B cell (primary cell): ENCODE measurements at regions of chr19 and their contacts with region 1.

Region 1: GRCh38 chr19:54390942-54391577 is 24.2 kb upstream of the TTYH1 start:
- DNase-seq: peak; percentile 85
- ATAC-seq: peak; percentile 34
- H3K4me3 ChIP-seq: no peak overlapping the region
- H3K4me3 Mint-ChIP-seq: peak overlapping the region; percentile 68
- H3K27ac ChIP-seq: no peak overlapping the region
- H3K27ac Mint-ChIP-seq: peak overlapping the region; percentile 73
- H3K4me1 ChIP-seq: peaks cover 41 to 50% of the 10 kb centered on the region in 2 donors
- H3K4me1 Mint-ChIP-seq: peaks cover 46% of the 10 kb centered on the region
- H3K27me3 ChIP-seq: peaks cover 0 to 1% (median 0%) of the 10 kb centered on the region in 4 experiments
- H3K27me3 Mint-ChIP-seq: peaks cover 17% of the 10 kb centered on the region
- CTCF ChIP-seq: peak; percentile 94

Region 2: GRCh38 chr19:54325194-54325621 is 65.9 kb before region 1 on chr19:
- CTCF ChIA-PET with region 1: interaction called, 235 read pairs
- POLR2A ChIA-PET with region 1: interaction called, 6 read pairs
- intact Hi-C with region 1: loop called (anchors 1 kb)
- DNase-seq: peak; percentile 79
- ATAC-seq: peak; percentile 70
- H3K4me3 ChIP-seq: no peak overlapping the region
- H3K4me3 Mint-ChIP-seq: peak overlapping the region; percentile 42
- H3K27ac ChIP-seq: no peak overlapping the region
- H3K27ac Mint-ChIP-seq: peak overlapping the region; percentile 74
- H3K4me1 ChIP-seq: peaks cover 39 to 48% of the 10 kb centered on the region in 2 donors
- H3K4me1 Mint-ChIP-seq: peaks cover 39% of the 10 kb centered on the region
- H3K27me3 ChIP-seq: no peaks in the 10 kb centered on the region
- H3K27me3 Mint-ChIP-seq: peaks cover 8% of the 10 kb centered on the region
- CTCF ChIP-seq: peak; percentile 98

Region 3: DNA sequence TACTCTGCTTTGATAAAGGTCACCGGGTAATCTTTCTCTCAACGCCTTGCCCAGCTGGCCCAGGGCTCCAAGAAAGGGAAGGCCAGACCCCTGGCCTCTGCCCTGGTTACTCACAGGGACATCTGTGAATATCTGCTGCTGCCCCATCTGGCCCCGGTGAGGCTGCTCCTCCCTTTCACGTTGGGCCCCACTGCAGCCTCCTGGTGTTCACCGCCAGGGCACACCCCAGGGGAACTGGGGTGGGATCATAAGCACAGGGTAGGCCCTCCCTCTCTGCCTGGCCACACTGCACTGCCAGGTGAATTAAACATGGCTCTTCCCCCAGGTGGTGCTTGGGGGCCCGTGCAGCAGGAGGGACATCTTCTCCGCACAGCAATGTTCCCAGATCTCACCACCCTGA is 39.0 kb before region 1 on chr19:
- CTCF ChIA-PET with region 1: interaction called, 47 read pairs
- POLR2A ChIA-PET with region 1: interaction called, 4 read pairs
- intact Hi-C with region 1: loop called (anchors 2 kb)
- DNase-seq: peak; percentile 61
- ATAC-seq: peak; percentile 79
- H3K4me3 ChIP-seq: peak overlapping the region in 1 of 5 experiments; percentile 2
- H3K4me3 Mint-ChIP-seq: peak overlapping the region; percentile 66
- H3K27ac ChIP-seq: peak overlapping the region; percentile 69 to 71
- H3K27ac Mint-ChIP-seq: peak overlapping the region; percentile 89
- H3K4me1 ChIP-seq: peaks cover 49 to 62% of the 10 kb centered on the region in 2 donors
- H3K4me1 Mint-ChIP-seq: peaks cover 55% of the 10 kb centered on the region
- H3K27me3 ChIP-seq: peaks cover 0 to 2% (median 0%) of the 10 kb centered on the region in 4 experiments
- H3K27me3 Mint-ChIP-seq: no peaks in the 10 kb centered on the region
- CTCF ChIP-seq: peak; percentile 30

Region 4: GRCh38 chr19:54364775-54365257 is 26.2 kb before region 1 on chr19 and contains the start of gene LAIR1:
- CTCF ChIA-PET with region 1: interaction called, 72 read pairs
- POLR2A ChIA-PET with region 1: interaction called, 12 read pairs
- intact Hi-C with region 1: no loop called
- DNase-seq: peak; percentile 62
- ATAC-seq: peak; percentile 62
- H3K4me3 ChIP-seq: peak within 1 kb of the TSS; percentile 65 to 78 (median 74)
- H3K4me3 Mint-ChIP-seq: peak within 1 kb of the TSS; percentile 90
- H3K27ac ChIP-seq: peak within 1 kb of the TSS; percentile 66 to 74
- H3K27ac Mint-ChIP-seq: peak within 1 kb of the TSS; percentile 90
- H3K4me1 ChIP-seq: peaks cover 62 to 79% of the 10 kb centered on the region in 2 donors
- H3K4me1 Mint-ChIP-seq: peaks cover 82% of the 10 kb centered on the region
- H3K27me3 ChIP-seq: no peaks in the 10 kb centered on the region
- H3K27me3 Mint-ChIP-seq: no peaks in the 10 kb centered on the region
- CTCF ChIP-seq: no peak
- total RNA-seq, gene LAIR1: 40.2 and 41.5 TPM in 2 replicates